ENCODE measurements at regions of chr1 and their contacts with region 1.

Region 1: DNA sequence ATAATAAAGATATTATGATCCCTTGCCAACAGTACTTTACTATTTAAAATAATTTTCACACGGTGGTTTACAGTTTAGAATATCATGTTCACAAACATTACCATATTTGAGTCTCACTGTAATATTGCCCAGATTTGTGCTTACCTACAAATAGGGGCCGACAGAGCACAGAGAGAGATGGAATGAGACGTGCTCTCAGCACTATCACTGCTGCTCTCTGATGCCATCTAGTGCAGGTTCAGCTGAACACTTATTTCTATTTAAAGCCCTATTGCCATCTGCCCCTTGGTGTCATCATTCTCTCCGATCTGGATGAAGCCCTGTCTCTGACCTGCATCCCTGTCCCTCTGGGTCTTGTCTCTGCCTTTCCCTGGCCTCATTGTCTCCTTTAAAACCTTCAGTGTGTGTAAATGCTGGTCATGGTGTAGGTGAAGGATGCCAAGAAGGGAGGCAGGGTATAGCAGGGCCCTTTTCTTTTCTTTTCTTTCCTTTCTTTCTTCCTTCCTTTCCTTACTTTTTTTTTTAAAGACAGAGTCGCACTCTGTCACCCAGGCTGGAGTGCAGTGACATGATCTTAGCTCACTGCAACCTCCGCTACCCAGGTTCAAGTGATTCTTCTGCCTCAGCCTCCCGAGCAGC is 6.9 kb upstream of the GPATCH4 start:
- DNase-seq: peak; percentile 53
- ATAC-seq: peak; percentile 97
- H3K4me3 Mint-ChIP-seq: no peak overlapping the region
- H3K27ac Mint-ChIP-seq: no peak overlapping the region
- H3K4me1 Mint-ChIP-seq: peaks cover 4% of the 10 kb centered on the region; the same call in 1 of the 2 replicates
- H3K27me3 Mint-ChIP-seq: peaks cover 5% of the 10 kb centered on the region; the same call in 1 of the 2 replicates
- CTCF ChIP-seq: no peak; the same call in 1 of the 2 replicates

Region 2: DNA sequence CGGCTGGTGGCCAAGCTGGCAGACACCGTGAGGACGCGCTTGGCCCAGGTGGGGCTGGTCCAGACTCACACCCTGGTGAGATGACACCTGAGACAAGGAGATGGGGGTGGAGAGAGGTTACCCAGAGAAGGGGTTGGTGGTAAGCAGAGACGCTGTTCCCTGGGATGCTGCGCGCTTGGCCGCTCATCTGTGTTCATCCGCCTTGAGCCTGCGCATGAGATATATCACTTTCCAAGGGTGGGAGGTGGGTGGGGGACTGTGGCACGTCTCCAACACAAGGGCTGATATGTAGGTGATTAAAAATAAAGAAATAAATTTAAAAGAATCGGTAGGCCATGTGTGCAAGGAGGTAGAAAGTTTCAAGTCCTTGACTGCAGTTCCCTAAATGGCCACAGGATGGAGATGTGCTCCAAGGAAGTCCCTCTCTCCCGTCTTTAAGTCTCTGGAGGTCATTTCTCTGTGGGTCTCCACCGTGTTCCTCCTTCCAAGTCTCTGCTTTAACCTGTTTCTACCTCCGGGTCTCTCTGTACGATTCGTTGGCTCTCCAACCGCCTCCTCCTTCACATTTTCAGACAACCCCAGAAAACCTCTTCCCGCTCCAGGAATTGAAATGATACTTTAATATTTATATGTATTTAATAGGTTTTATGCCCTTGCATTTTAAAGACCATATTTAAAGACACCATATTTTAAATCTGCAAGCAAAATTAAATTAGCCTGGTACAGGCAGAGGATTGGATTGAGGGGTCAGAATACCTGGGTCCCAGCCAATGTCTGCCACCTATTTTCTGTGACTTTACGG is 24.1 kb before region 1 on chr1:
- CTCF ChIA-PET with region 1: interaction called, 12 read pairs
- POLR2A ChIA-PET with region 1: no interaction called
- DNase-seq: peak; percentile 85
- ATAC-seq: peak; percentile 65
- H3K4me3 Mint-ChIP-seq: peak overlapping the region; percentile 52
- H3K27ac Mint-ChIP-seq: no peak overlapping the region
- H3K4me1 Mint-ChIP-seq: peaks cover 20% of the 10 kb centered on the region
- H3K27me3 Mint-ChIP-seq: peaks cover 2% of the 10 kb centered on the region
- CTCF ChIP-seq: peak; percentile 87

Region 3: DNA sequence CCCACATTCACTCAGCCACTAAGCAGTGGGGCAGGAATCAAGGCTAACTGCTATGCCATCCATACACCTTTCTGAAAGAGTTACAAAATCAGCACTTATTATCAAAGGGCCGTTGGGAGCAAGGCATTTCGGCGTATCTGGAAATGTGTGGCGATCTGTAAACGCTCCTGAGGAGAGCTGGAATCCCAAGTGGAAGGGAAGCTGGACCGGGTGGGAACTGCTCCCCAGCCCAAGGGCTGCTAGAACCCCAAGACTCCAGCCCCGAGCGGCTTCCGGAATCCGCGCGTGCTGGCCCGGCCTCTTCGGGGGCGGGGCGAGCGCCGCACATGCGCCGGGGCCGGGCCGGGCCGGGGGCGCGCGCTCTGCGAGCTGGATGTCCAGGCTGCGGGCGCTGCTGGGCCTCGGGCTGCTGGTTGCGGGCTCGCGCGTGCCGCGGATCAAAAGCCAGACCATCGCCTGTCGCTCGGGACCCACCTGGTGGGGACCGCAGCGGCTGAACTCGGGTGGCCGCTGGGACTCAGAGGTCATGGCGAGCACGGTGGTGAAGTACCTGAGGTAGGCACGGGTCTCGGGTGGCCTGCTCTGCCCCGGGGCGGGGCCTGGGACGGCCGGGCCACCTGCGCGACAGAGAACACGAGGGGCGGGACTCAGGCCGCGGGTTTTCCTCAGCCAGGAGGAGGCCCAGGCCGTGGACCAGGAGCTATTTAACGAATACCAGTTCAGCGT is 16.6 kb before region 1 on chr1 and contains the start of gene NAXE:
- CTCF ChIA-PET with region 1: interaction called, 28 read pairs
- POLR2A ChIA-PET with region 1: interaction called, 6 read pairs
- DNase-seq: peak; percentile 81
- ATAC-seq: peak; percentile 91
- H3K4me3 Mint-ChIP-seq: peak within 1 kb of the TSS; percentile 79
- H3K27ac Mint-ChIP-seq: peak within 1 kb of the TSS; percentile 94
- H3K4me1 Mint-ChIP-seq: peaks cover 16% of the 10 kb centered on the region
- H3K27me3 Mint-ChIP-seq: no peaks in the 10 kb centered on the region; the same call in 1 of the 2 replicates
- CTCF ChIP-seq: no peak
- total RNA-seq, gene NAXE: 81.6 to 98.1 TPM (median 92.8 TPM) in 3 replicates

Region 4: GRCh38 chr1:156677616-156678596 is 69.8 kb after region 1 on chr1:
- CTCF ChIA-PET with region 1: no interaction called
- POLR2A ChIA-PET with region 1: no interaction called
- DNase-seq: peak; percentile 77
- ATAC-seq: peak; percentile 2
- H3K4me3 Mint-ChIP-seq: peak overlapping the region; percentile 76
- H3K27ac Mint-ChIP-seq: peak overlapping the region; percentile 82
- H3K4me1 Mint-ChIP-seq: peaks cover 57% of the 10 kb centered on the region
- H3K27me3 Mint-ChIP-seq: peaks cover 34% of the 10 kb centered on the region
- CTCF ChIP-seq: peak; percentile 76